RWPE1 (cell line): ENCODE measurements at regions of chr1 and their contacts with region 1.

Region 1: DNA sequence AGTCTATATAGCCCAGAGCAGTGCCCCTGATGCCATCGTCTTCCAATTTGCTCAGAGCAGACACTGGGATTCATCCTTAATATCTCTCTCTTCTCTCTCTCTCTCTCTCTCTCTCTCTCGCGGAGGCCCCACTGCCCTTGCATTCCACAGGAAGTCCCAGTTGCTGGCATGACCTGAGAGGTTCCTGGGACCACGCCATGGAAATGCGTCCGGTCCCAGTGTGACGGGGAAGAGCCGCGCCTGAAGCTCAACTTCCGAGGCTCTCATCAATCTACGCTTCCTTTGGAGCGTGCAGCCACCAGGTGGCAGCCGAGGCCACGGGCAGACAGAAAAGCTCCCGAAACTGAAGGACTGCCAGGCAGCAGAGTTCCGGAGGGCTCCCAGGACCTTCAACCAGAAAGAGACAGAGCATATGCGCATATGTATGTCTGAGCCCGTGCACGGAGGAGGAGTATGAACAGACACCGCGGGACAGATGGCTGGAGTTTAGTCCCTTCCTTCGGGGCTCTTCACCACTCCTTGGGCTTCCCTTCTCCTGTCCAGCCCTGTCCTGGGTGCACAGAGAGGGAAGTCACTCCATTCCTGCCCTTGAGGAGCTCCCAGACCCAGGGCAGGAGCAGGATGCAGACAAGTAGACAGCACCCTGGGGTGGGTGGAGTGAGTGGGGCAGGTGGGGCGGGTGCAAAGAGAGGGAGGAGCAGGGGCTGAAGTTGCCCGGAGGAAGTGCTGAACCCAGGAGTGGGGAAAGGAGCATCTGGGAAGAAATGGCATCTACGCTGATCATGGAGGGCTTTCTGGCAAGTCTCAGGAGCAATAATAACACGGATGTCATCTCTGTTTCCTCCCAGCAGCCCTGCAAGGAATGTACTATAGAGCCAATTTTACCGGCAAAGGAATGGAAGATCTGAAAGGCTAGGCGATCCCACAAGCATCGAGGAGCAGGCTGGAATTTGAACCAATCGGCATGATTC is 10.5 kb downstream of the PDZK1IP1 start:
- DNase-seq: peak; percentile 82
- H3K27ac ChIP-seq: peak overlapping the region; percentile 64
- CTCF ChIP-seq: peak; percentile 82

Region 2: DNA sequence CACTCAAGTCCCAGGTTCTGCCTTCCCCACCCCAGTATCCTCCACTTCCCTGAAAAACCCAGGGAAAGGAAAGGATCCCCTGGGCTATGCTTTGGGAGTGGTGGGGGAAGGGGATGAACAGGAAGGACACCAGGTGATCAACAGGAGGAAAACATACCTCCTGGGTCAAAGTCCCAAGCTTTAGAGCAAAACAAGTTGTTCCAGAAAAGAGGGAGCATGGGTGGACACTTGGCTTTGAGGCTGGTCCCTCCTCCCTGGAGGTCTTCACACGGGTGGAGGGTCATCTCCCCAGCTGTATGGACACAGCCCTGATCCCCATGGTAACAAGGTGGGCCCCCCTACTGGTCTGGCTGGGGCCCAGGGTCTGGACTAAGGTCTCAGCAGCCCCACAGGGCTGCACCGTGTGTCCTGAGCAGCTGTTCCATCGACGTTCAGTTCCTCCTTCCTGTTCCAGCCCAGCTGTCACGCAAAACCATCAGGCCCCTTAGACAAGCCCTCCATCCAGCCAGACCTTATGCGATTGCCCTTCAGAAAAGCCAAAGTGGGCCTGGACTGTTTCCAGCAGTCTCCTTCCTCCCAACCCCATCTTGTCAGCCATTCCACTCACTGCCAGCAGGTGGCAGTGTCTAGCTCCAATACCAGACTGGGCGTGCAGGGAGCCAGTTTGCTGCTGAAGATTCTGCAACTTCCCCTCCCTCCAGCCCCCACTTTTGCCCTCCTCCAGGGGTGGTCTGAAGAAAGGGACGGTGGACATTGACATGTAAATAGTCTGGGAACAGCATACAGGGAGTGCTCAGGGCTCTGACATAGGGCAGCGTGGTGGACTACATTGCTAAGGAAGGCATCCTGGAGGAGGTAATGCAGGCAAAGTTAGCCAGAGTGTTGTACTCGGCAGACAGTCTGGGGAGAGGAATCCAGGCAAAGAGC is 13.4 kb after region 1 on chr1:
- CTCF ChIA-PET with region 1: interaction called, 12 read pairs
- POLR2A ChIA-PET with region 1: interaction called, 4 read pairs
- DNase-seq: peak; percentile 73
- H3K27ac ChIP-seq: no peak overlapping the region
- CTCF ChIP-seq: peak; percentile 91

Region 3: DNA sequence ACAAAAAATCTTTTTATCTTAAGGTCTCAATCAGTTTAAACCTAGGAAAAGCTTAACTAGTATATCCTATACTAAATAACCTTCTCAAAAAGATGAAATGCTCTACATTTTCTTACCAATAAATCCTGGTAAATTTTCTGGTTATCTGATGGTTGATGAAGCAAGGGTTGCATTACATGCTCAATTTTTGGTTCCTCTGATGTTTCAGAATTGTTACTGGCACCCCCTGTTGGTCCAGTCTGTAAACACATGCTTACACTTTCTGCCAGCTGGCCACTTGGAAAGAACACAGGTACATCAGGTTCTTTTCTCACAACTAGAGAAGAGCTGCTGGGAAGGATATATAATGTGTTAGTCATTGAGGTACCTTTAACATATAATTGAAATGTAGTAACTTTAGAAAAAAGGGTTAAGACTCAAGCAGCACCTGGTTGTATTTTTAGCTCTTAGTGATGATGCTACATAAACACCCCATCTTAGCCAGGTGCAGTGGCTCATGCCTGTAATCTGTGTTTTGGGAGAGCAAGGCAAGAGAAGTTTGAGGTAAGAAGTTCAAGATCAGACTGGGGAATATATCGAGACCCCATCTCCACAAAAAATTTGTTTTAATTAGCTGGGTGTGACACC is 83.6 kb after region 1 on chr1:
- CTCF ChIA-PET with region 1: interaction called, 20 read pairs
- POLR2A ChIA-PET with region 1: no interaction called
- DNase-seq: peak; percentile 45
- H3K27ac ChIP-seq: no peak overlapping the region
- CTCF ChIP-seq: peak; percentile 66